ENCODE measurements at regions of chr1 and their contacts with region 1.

Region 1: GRCh38 chr1:205485338-205486228 is 18.9 kb upstream of the CDK18 start:
- DNase-seq: peak; percentile 88
- H3K4me3 Mint-ChIP-seq: no peak overlapping the region
- H3K27ac Mint-ChIP-seq: no peak overlapping the region
- H3K4me1 Mint-ChIP-seq: peaks cover 14% of the 10 kb centered on the region
- H3K27me3 Mint-ChIP-seq: peaks cover 42% of the 10 kb centered on the region
- CTCF ChIP-seq: peak; percentile 100

Region 2: GRCh38 chr1:205190845-205191577 is 294.6 kb before region 1 on chr1:
- CTCF ChIA-PET with region 1: no interaction called
- POLR2A ChIA-PET with region 1: no interaction called
- intact Hi-C with region 1: no loop called
- DNase-seq: no peak
- H3K4me3 Mint-ChIP-seq: no peak overlapping the region
- H3K27ac Mint-ChIP-seq: no peak overlapping the region
- H3K4me1 Mint-ChIP-seq: peaks cover 23% of the 10 kb centered on the region
- H3K27me3 Mint-ChIP-seq: no peaks in the 10 kb centered on the region
- CTCF ChIP-seq: no peak

Region 3: GRCh38 chr1:205354259-205354904 is 131.2 kb before region 1 on chr1:
- CTCF ChIA-PET with region 1: interaction called, 393 read pairs
- POLR2A ChIA-PET with region 1: interaction called, 24 read pairs
- intact Hi-C with region 1: loop called (anchors 1 kb)
- DNase-seq: peak; percentile 92
- H3K4me3 Mint-ChIP-seq: no peak overlapping the region
- H3K27ac Mint-ChIP-seq: no peak overlapping the region
- H3K4me1 Mint-ChIP-seq: peaks cover 13% of the 10 kb centered on the region
- H3K27me3 Mint-ChIP-seq: peaks cover 23% of the 10 kb centered on the region
- CTCF ChIP-seq: peak; percentile 91

Region 4: DNA sequence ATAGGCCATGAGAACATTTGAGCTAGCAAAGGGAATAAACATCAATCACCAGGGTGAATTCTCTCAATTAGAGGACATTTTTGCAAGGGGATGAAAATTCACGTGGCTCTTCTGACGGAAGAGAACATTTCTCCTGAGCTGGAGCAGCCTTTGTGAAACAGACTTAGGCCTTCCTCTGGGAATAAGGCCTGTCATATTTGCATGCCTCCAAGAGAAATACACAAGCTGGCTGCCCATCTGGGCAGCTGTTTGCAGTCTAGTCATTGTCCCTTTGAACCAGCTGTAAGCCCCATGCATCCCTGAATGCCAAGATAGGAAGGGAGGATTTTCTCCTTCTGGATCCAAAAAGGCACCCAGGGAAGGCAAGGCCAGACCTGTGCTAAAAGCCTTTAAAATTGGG is 69.3 kb before region 1 on chr1:
- CTCF ChIA-PET with region 1: interaction called, 296 read pairs
- POLR2A ChIA-PET with region 1: interaction called, 6 read pairs
- intact Hi-C with region 1: no loop called
- DNase-seq: no peak
- H3K4me3 Mint-ChIP-seq: no peak overlapping the region
- H3K27ac Mint-ChIP-seq: no peak overlapping the region
- H3K4me1 Mint-ChIP-seq: no peaks in the 10 kb centered on the region
- H3K27me3 Mint-ChIP-seq: peaks cover 40% of the 10 kb centered on the region
- CTCF ChIP-seq: no peak

Region 5: DNA sequence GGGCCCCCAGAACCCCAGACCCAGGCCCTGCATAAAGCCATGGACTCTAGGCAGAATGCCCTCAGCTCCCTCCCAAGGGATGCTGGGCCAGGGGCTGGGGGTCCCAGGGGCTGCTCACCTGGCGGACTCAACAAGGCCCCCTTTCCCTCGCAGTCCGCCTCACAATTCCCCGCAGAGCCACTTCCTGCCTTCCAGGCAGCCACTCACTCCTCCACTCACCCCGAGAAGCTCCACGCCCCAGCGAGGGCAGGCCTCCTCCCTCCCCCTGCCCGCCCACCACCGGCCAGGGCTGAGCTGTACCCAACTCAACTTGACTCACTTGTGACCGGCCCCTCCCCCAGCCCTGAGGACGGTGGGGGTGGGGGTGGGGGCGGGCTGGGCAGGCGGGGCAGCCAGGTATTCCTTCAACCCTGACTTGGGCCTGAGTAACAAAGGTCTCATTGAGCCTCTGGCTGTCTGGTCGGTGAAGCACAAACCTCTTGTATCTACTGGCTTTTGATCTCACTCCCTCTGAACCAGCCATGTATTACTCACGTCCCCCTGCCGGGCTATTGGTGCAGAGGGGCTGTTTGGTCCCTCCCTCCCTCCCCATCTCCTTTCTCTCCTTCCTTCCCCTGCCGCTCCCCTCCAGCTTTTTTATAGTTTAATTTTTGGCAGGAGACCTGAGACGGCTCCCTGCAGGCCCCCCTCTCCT is 35.7 kb before region 1 on chr1:
- CTCF ChIA-PET with region 1: interaction called, 27 read pairs
- POLR2A ChIA-PET with region 1: interaction called, 4 read pairs
- intact Hi-C with region 1: no loop called
- DNase-seq: peak; percentile 93
- H3K4me3 Mint-ChIP-seq: peak overlapping the region; percentile 89
- H3K27ac Mint-ChIP-seq: peak overlapping the region; percentile 98
- H3K4me1 Mint-ChIP-seq: peaks cover 36% of the 10 kb centered on the region
- H3K27me3 Mint-ChIP-seq: peaks cover 40% of the 10 kb centered on the region
- CTCF ChIP-seq: peak; percentile 25

Region 6: DNA sequence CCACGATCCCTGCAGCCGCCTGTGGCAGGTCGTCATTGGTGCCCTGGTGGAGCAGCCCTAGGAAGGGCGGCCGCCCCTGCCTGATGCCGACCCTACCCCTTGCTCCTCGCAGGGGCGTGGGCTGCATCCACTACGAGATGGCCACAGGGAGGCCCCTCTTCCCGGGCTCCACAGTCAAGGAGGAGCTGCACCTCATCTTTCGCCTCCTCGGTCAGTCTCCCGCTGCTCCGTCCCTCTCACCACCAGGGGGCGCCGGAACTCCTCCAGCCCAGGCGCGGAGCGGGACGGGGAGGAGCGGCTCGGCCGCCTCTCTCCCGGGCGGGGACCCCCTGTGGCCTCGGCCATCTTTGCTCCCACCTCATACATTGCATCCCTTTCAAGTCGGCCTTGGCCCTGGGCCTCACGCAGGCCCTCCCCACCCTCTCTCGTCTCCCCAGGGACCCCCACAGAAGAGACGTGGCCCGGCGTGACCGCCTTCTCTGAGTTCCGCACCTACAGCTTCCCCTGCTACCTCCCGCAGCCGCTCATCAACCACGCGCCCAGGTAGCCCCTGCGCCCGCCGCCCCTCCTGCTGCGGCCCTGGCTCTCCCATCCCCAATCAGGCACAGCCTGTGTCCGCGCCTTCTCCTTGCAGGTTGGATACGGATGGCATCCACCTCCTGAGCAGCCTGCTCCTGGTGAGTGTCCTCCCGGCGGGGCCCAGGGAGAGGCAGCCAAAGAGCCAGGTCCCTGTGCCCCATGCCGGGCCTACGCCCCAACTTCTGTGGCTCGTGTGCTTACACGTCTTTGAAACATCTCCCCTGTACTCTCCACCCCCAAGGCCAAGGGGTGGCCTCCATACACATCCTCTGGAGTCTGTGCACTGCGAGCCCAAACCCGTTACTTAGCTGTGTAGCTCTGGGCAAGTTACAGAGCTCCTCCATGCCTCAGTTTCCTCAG is 43.6 kb after region 1 on chr1:
- CTCF ChIA-PET with region 1: interaction called, 1,608 read pairs
- POLR2A ChIA-PET with region 1: interaction called, 70 read pairs
- intact Hi-C with region 1: loop called (anchors 1 kb)
- DNase-seq: peak; percentile 89
- H3K4me3 Mint-ChIP-seq: peak overlapping the region; percentile 32
- H3K27ac Mint-ChIP-seq: no peak overlapping the region
- H3K4me1 Mint-ChIP-seq: peaks cover 6% of the 10 kb centered on the region
- H3K27me3 Mint-ChIP-seq: no peaks in the 10 kb centered on the region
- CTCF ChIP-seq: peak; percentile 100